Heart left ventricle (tissue), 16 donors: ENCODE measurements at regions of chr1 and their contacts with region 1.

Region 1: DNA sequence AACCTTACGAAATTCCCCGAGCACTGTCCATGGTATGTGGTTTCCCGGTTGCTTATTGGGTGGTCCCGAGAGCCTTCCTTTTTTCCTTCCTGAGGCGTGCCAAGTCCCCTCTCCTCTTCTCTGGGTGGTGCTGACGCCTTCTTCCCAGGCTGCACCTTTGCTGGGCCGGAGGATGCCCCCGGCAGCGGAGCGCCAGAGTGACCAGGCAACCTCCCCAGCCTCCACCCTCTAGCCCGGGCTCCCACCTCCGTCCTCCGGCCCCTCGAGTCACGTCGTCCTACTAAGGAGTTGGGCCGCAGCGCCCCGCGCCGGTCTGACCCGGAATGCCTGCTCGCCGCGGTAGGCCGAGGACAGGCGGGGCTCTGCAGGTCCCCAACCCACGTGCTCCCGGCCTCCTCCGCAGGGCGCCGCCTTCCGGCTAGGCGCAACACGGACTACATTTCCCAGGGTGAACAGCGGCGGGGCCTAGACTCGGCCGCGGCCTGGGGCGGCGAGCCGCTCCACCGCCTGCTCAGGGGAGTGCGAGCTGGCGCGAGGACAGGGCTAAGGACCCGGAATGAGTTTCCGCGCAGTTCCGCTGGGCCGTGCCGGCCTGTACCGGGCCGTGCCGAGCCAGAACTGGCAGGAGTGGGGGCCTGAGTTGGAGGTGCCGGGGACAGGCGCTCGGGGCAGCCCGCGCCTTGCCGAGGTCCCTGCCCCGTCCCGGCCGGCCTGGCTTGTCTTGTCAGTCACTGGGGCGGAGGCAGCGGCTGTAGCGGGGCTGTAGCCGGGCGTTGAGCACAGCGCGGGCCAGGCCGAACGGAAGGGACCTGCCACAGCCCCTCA is at the start of gene IPO13:
- DNase-seq: peak; percentile 95 to 98 (median 96)
- ATAC-seq: peak; percentile 90 to 94 (median 93)
- H3K4me3 ChIP-seq: peak within 1 kb of the TSS; percentile 48 to 83 (median 71)
- H3K27ac ChIP-seq: peak within 1 kb of the TSS; percentile 89 to 99 (median 97)
- H3K4me1 ChIP-seq: peaks cover 6 to 57% (median 48%) of the 10 kb centered on the region in 12 donors
- H3K27me3 ChIP-seq: no peaks in the 10 kb centered on the region
- CTCF ChIP-seq: peak; percentile 56 to 88 (median 70)
- POLR2A ChIP-seq: peak in 1 of 2 donors; percentile 83
- total RNA-seq, gene IPO13: 51.4 to 71.0 (median 56.7) TPM

Region 2: DNA sequence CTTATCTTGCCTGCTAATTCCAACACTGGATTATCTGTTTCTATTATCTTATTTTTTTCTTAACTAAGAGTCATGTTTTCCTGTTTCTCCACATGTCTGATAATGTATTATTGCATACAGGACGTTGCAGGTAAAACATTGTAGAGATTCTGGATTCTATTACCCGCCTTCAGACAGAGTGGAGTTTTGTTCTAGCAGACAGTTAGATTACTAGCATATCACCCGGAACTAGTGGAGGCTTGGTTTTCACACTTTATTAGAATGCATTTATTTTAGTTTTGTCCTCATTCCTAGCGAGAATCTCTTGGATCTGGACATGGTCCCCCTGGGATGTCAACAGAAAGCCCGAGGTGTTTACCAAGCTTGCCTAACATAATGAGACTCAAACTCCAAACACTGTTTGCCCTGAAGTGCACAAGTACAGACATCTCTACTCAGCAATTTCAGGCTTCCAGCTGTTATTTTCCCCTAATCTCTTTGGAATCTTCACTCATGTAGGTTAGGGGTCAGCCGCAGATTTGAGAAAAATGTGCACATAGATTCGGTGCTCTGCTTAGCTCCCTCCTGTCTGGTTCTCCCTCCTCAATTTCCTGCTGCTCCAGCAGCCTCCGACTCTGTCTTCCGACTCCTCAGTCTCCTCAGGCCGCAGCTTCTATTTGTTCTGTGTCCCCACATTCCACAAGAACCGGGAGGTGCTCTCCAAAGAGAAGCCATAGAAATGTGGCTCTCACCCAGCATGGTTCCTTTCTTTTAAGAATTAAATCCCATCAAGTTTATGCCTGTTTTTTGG is 452.6 kb before region 1 on chr1:
- intact Hi-C with region 1: no loop called
- DNase-seq: no peak
- ATAC-seq: no peak
- H3K4me3 ChIP-seq: no peak overlapping the region
- H3K27ac ChIP-seq: no peak overlapping the region
- H3K4me1 ChIP-seq: no peaks in the 10 kb centered on the region
- H3K27me3 ChIP-seq: no peaks in the 10 kb centered on the region
- CTCF ChIP-seq: no peak
- POLR2A ChIP-seq: no peak

Region 3: DNA sequence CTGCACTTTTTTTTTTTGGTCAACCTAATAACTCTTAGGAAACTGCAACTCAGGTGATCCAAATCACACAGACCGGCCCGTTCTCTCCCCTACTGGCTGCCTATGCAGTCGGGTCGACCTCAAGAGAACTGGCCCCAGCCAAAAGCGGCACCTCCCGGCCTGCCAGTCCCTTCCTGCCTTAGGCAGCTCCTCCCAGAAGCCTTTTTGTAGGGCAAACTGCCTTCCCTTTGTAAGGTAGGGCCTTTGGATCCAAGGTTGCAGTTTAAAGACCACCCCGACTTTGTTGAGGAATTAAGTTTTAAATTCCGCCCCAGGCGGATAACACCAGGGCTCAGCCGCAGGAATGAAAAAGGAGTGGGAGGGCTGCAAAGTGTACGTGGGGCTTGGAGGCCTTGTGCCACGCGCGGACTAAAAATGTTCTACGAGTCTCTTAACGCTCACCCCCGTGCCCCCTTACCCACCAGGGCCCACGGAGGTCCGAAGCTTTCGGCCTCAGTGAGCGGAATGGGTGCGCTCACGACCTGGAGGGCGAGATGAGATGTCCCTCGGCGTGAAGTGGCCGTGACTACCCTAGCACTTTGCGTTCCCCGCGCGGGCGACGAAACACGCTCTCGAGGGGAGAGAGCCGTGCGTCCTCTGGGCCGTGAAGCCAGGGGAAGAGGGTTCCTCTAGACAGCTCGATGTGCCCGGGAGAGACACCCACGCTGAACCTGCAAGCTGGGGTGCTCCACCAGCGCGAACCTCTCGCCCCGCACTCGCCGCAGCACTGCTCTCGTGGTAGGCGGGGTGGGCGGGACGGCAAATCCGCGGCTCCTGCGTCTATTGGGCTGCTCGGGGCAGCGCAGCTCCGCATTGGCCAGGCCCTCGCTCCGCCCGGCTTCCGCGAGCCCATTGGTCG is 239.6 kb before region 1 on chr1:
- intact Hi-C with region 1: loop called in 1 of 10 experiments (anchors 5 kb)
- DNase-seq: peak; percentile 92 to 95 (median 94)
- ATAC-seq: peak; percentile 97 to 99 (median 98)
- H3K4me3 ChIP-seq: peak overlapping the region; percentile 71 to 95 (median 86)
- H3K27ac ChIP-seq: peak overlapping the region in 10 of 12 donors; percentile 74 to 90 (median 84)
- H3K4me1 ChIP-seq: peaks cover 0 to 42% (median 17%) of the 10 kb centered on the region in 12 donors
- H3K27me3 ChIP-seq: no peaks in the 10 kb centered on the region
- CTCF ChIP-seq: no peak
- POLR2A ChIP-seq: peak in 1 of 2 donors; percentile 58

Region 4: GRCh38 chr1:43958351-43959255 is 12.2 kb after region 1 on chr1:
- intact Hi-C with region 1: loop called in 1 of 10 experiments (anchors 1 kb)
- DNase-seq: no peak
- ATAC-seq: peak in 2 of 4 donors; percentile 25 to 26
- H3K4me3 ChIP-seq: no peak overlapping the region
- H3K27ac ChIP-seq: no peak overlapping the region
- H3K4me1 ChIP-seq: peaks cover 0 to 23% (median 0%) of the 10 kb centered on the region in 12 donors
- H3K27me3 ChIP-seq: no peaks in the 10 kb centered on the region
- CTCF ChIP-seq: no peak
- POLR2A ChIP-seq: no peak

Region 5: DNA sequence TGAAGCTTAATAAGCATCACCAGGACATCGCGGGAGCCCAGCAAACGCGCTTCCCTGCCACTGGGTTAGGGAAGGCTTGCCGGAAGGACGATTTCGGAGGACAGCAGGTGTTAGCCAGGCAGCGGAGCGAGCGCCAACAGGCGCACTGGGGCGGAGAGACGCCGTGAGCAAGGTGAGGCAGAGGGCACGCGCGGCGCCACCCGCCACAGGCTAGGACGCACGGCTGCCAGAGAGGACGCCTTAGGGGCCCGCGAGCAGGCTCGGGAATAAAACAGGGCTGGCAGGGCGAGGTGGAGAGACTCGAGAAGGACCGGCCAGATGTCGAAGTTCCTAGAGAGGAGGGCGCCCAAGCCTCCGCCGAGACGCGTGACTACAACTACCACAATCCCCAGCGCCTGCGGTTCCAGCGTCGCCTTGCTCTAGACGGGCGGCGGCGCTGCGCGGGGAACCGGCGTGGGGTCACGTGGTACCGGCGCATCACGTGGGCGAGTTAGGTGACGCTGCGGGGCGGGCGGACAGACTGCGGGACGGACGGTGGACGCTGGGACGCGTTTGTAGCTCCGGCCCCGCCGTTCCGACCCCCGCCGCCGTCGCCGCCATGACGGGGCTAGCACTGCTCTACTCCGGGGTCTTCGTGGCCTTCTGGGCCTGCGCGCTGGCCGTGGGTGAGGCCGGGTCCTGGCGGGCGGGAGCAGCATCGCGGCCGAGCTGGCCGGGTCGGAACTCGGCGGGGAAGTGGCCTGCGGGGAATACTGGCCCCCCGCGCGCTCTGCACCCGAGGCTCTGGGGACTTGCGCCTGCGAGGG is 28.2 kb after region 1 on chr1 and contains the start of gene ATP6V0B:
- intact Hi-C with region 1: loop called in 5 of 10 experiments (anchors 1 to 2 kb)
- DNase-seq: peak; percentile 97 to 98 (median 98)
- ATAC-seq: peak; percentile 82 to 88 (median 86)
- H3K4me3 ChIP-seq: peak within 1 kb of the TSS; percentile 59 to 93 (median 89)
- H3K27ac ChIP-seq: peak within 1 kb of the TSS; percentile 83 to 97 (median 92)
- H3K4me1 ChIP-seq: peaks cover 6 to 61% (median 46%) of the 10 kb centered on the region in 12 donors
- H3K27me3 ChIP-seq: no peaks in the 10 kb centered on the region
- CTCF ChIP-seq: peak in 8 of 12 donors; percentile 15 to 48 (median 24)
- POLR2A ChIP-seq: peak in 1 of 2 donors; percentile 96
- total RNA-seq, gene ATP6V0B: 71.4 to 140 (median 93.2) TPM